ENCODE measurements at regions of chr3 and their contacts with region 1.

Region 1: GRCh38 chr3:98329392-98330124 is 24.1 kb upstream of the OR5K4 start:
- DNase-seq: peak in 2 of 5 donors; percentile 21 to 29
- ATAC-seq: peak in 1 of 4 donors; percentile 53
- H3K4me3 ChIP-seq: no peak overlapping the region
- H3K27ac ChIP-seq: no peak overlapping the region
- H3K4me1 ChIP-seq: no peaks in the 10 kb centered on the region
- H3K27me3 ChIP-seq: peaks cover 0 to 15% (median 4%) of the 10 kb centered on the region in 9 donors
- CTCF ChIP-seq: peak; percentile 38 to 67 (median 57)
- POLR2A ChIP-seq: no peak

Region 2: GRCh38 chr3:98039322-98040024 is 290.1 kb before region 1 on chr3:
- intact Hi-C with region 1: loop called (anchors 1 to 2 kb)
- DNase-seq: peak in 3 of 5 donors; percentile 13 to 31 (median 19)
- ATAC-seq: peak; percentile 58 to 94 (median 84)
- H3K4me3 ChIP-seq: peak overlapping the region in 9 of 12 donors; percentile 20 to 51 (median 36)
- H3K27ac ChIP-seq: no peak overlapping the region
- H3K4me1 ChIP-seq: peaks cover 0 to 6% (median 0%) of the 10 kb centered on the region in 12 donors
- H3K27me3 ChIP-seq: peaks cover 0 to 25% (median 0%) of the 10 kb centered on the region in 9 donors
- CTCF ChIP-seq: peak; percentile 74 to 94 (median 84)
- POLR2A ChIP-seq: no peak

Region 3: DNA sequence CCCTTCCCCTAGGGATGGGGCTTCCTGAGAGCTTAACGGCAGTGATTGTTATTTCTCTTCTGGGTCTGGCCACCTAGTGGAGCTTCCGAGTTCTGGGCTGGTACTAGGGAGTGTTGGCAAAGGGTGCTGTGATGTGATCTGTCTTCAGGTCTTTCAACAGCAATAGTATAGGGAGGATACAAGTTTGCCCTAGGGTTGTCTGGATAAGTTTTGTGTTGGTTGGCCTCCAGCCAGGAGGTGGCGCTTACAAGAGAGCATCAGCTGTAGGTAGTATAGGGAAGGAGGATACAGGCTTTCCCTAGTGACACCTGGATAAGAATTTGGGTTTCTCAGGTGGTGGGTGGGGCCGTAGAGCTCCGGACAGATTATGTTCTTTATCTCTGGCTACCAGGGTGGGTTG is 283.0 kb after region 1 on chr3:
- intact Hi-C with region 1: no loop called
- DNase-seq: peak in 1 of 5 donors; percentile 26
- ATAC-seq: peak in 1 of 4 donors; percentile 18
- H3K4me3 ChIP-seq: no peak overlapping the region
- H3K27ac ChIP-seq: peak overlapping the region in 1 of 12 donors; percentile 39
- H3K4me1 ChIP-seq: no peaks in the 10 kb centered on the region
- H3K27me3 ChIP-seq: no peaks in the 10 kb centered on the region
- CTCF ChIP-seq: no peak
- POLR2A ChIP-seq: no peak